Breast epithelium (tissue), 4 donors: ENCODE measurements at regions of chr9 and their contacts with region 1.

Region 1: GRCh38 chr9:110116543-110116885 is 91.4 kb downstream of the C9orf152 start:
- DNase-seq: no peak
- H3K4me3 ChIP-seq: no peak overlapping the region
- H3K27ac ChIP-seq: peak overlapping the region in 1 of 2 donors; percentile 9
- H3K4me1 ChIP-seq: no peaks in the 10 kb centered on the region
- H3K27me3 ChIP-seq: no peaks in the 10 kb centered on the region
- CTCF ChIP-seq: no peak
- POLR2A ChIP-seq: no peak

Region 2: GRCh38 chr9:110095776-110096175 is 20.7 kb before region 1 on chr9:
- intact Hi-C with region 1: loop called (anchors 1 kb)
- DNase-seq: no peak
- H3K4me3 ChIP-seq: no peak overlapping the region
- H3K27ac ChIP-seq: peak overlapping the region in 1 of 2 donors; percentile 35
- H3K4me1 ChIP-seq: no peaks in the 10 kb centered on the region
- H3K27me3 ChIP-seq: no peaks in the 10 kb centered on the region
- CTCF ChIP-seq: no peak
- POLR2A ChIP-seq: no peak